ENCODE measurements at regions of chr5 and their contacts with region 1.

Region 1: DNA sequence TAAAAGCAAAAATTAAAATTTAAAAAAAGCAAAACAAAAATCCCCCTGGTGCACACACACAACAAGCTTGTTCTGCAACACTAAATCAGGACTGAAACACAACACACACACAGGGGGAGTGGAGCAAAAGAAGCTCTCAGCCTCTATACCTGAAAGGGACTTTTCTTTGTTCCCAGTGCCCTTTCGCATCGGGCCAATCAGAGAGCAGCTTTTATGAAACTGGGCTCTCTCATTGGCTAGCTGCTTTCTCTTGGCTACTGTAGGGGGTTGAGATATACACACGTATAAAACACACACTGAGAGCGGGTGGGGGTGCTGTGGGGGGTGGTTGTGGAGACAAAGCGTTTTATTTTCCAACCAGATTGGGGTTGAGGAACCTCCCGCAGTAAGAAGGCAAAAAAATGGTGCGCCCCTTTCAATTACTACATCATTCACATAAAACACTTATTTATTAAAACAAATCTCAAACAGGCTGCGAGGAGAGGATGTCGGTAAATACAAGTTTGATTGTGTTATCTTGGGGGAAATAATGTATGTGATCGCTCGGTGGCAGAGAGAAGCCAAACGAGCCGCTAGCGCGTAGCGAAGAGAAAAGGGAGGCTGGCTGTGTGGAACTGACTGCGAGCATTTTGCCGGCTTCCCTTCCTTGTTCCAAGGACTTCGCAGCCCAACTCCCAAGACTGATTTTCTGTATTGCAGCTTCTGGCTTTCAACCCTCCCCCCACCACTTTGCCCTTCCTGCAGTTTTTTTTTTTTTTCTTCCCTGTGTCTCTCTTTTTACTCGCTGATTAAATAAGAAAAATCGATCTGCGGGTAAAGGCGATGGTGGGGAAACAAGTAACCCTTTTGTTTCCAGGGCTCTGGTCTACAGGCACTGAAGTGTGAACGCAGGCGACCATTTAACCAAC is 2.5 kb upstream of the ZNF608 start:
- DNase-seq: peak; percentile 88
- H3K4me3 ChIP-seq: peak overlapping the region; percentile 64 to 70 (median 68)
- H3K27ac ChIP-seq: peak overlapping the region; percentile 92 to 93 (median 93)
- H3K4me1 ChIP-seq: peaks cover 0 to 23% (median 7%) of the 10 kb centered on the region in 4 donors
- H3K27me3 ChIP-seq: no peaks in the 10 kb centered on the region
- CTCF ChIP-seq: peak in 1 of 4 experiments; percentile 13
- EP300 ChIP-seq: no peak
- POLR2A ChIP-seq: peak; percentile 24 to 62

Region 2: DNA sequence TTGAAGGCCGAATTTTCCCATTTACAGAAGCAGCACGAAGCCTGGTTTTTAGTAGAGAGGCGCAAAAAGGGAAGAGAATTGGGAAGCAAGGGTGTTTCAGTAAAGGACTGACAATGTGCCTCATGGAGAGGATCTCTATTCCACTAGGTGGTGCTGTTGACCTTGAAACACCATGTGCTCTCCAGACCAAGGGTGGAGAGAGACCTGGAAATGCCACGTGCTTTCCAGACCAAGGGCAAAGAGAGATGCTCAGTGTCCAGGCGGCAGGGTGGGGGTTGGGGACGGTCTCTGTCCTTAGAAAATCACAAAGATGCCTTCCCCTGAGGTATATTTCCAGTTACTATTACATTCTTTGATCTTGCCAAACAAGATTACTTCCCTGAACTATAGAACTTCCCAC is 811.7 kb before region 1 on chr5:
- intact Hi-C with region 1: loop called (anchors 10 kb)
- DNase-seq: peak; percentile 62
- H3K4me3 ChIP-seq: no peak overlapping the region
- H3K27ac ChIP-seq: no peak overlapping the region
- H3K4me1 ChIP-seq: peaks cover 0 to 3% (median 0%) of the 10 kb centered on the region in 4 donors
- H3K27me3 ChIP-seq: no peaks in the 10 kb centered on the region
- CTCF ChIP-seq: peak in 3 of 4 experiments; percentile 60 to 73 (median 73)
- EP300 ChIP-seq: no peak
- POLR2A ChIP-seq: no peak

Region 3: DNA sequence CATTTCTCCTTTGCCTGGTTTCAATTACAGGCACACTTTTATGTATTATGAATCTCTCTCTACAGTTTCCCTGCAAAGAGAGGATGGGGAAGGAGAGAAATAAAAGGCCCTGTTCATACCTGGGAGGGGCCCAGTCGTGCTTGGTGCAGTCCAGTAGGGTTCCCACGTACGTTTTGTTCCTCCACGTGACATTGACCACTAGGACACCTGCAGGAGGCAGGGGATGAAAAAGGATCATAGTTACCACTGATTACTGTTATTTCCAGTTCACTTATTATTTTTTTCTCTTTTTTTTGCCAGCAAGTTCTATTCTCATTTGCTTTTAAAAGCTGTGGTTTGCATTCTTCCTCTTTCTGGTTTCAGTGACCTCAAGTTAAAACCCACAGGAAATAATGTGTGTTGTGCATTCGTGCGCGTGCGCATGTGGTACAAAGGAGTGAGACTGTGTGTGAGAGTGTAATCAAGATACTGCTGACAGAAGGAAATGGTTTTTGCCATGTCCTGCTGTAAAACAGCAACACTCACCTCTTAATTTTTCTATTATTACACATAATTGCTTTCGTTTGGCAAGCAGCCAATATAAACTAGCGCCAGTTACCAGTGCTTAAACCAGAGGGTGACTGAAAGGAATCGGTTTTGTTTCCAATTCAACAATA is 99.3 kb before region 1 on chr5:
- intact Hi-C with region 1: loop called (anchors 2 kb)
- DNase-seq: no peak
- H3K4me3 ChIP-seq: peak overlapping the region in 1 of 4 donors; percentile 9
- H3K27ac ChIP-seq: peak overlapping the region; percentile 83 to 93 (median 86)
- H3K4me1 ChIP-seq: peaks cover 0 to 60% (median 57%) of the 10 kb centered on the region in 4 donors
- H3K27me3 ChIP-seq: no peaks in the 10 kb centered on the region
- CTCF ChIP-seq: no peak
- EP300 ChIP-seq: no peak
- POLR2A ChIP-seq: no peak

Region 4: DNA sequence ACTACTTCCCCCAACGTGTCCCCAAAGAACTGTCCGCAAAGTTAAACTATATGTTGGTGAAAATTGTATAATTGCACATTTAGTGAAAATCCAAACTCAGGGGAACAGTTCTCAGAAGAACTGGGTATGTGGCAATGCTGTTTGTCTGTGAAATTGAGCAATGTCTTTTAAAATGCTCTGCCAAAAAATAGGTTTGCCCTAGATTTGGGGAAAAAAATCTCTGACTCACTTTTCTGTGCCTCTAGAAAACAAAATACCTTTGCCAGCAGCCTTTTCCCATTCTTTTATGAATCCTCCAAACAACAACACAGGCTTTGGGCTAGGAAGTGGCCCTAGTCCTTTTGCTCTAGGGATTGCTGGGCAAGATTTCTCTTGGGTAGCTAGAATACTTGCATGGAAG is 34.9 kb after region 1 on chr5:
- intact Hi-C with region 1: no loop called
- DNase-seq: no peak
- H3K4me3 ChIP-seq: no peak overlapping the region
- H3K27ac ChIP-seq: no peak overlapping the region
- H3K4me1 ChIP-seq: no peaks in the 10 kb centered on the region
- H3K27me3 ChIP-seq: no peaks in the 10 kb centered on the region
- CTCF ChIP-seq: no peak
- EP300 ChIP-seq: no peak
- POLR2A ChIP-seq: no peak

Region 5: DNA sequence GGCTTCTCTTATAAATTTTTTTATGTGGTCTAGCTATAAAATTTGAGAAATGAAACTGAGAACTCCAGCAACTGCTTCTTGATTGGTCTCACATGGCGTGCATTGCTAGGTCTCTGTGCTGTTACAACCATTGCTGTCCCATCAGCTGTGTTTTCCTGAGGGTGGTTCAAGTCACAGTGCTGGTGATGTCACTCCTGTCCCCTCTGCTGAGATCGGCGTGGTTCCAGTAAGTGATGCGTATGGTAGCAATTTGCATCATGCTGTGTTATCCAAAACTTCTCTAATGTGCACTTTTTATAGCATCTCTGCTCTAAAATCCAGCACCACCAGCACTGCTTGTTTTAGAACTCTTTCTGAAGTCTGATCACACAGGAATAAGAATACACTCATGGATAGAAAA is 110.1 kb after region 1 on chr5:
- intact Hi-C with region 1: no loop called
- DNase-seq: no peak
- H3K4me3 ChIP-seq: no peak overlapping the region
- H3K27ac ChIP-seq: no peak overlapping the region
- H3K4me1 ChIP-seq: no peaks in the 10 kb centered on the region
- H3K27me3 ChIP-seq: no peaks in the 10 kb centered on the region
- CTCF ChIP-seq: no peak
- EP300 ChIP-seq: no peak
- POLR2A ChIP-seq: no peak

Region 6: DNA sequence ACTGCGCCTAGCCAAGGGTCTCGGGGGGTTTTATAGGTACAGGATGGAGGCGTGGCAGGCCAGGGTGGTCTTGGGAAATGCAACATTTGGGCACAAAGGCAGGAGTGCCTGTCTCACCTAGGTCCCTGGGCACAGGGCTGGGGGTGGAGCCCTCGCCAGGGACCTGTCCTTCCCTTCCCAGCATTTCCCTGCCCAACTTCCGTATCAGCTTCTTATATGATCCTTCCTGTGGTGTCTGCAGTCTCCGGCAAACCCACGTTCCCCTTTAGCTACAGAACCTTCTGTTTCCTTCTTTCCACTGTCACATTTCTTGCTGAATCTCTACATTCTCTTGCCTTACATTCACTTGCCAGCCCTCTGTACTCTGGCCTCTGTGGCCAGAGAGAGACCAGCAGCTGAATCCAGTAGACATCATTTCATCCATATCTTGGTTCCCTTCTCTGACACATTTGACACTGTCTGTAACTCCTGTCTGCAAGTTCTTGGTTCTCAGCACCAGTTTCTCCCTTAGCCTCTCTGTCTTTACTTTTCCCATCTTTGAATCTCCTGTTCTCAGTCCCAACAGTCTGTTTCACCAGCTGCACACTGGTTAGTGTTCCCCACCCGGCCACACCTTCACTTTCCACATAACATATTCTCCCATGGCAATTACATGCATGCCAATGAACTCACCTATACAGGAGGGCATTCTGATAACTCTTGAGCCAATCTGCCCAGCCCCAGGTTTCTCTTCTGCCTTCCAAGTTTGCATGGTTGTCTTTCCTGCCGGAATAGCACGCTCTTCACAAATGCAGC is 132.2 kb after region 1 on chr5:
- intact Hi-C with region 1: no loop called
- DNase-seq: no peak
- H3K4me3 ChIP-seq: no peak overlapping the region
- H3K27ac ChIP-seq: no peak overlapping the region
- H3K4me1 ChIP-seq: no peaks in the 10 kb centered on the region
- H3K27me3 ChIP-seq: no peaks in the 10 kb centered on the region
- CTCF ChIP-seq: no peak
- EP300 ChIP-seq: no peak
- POLR2A ChIP-seq: no peak

Region 7: DNA sequence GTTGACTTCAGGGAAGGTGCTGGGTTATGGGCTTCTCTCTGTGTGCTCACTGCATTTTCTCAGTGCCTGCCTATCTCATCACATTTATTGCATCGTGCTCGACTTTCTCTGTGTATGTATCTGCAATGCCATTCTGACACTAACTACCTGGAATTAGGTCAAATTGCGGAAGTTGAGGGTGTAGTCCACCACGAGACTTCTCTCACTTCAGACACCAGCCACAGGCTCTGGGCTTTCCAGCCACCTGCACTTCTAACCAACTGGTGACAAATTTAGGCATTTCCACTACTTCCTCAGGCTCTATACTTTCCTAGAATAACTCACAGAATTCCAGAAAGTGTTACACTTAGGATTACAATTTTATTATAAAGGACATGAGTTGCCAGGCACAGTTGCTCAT is 186.1 kb after region 1 on chr5:
- intact Hi-C with region 1: loop called (anchors 10 kb)
- DNase-seq: no peak
- H3K4me3 ChIP-seq: no peak overlapping the region
- H3K27ac ChIP-seq: no peak overlapping the region
- H3K4me1 ChIP-seq: peaks cover 0 to 28% (median 16%) of the 10 kb centered on the region in 4 donors
- H3K27me3 ChIP-seq: no peaks in the 10 kb centered on the region
- CTCF ChIP-seq: no peak
- EP300 ChIP-seq: no peak
- POLR2A ChIP-seq: no peak

Region 8: GRCh38 chr5:125484742-125485641 is 736.1 kb after region 1 on chr5:
- intact Hi-C with region 1: loop called (anchors 2 kb)
- DNase-seq: peak; percentile 95
- H3K4me3 ChIP-seq: no peak overlapping the region
- H3K27ac ChIP-seq: peak overlapping the region; percentile 75 to 86 (median 84)
- H3K4me1 ChIP-seq: peaks cover 0 to 49% (median 28%) of the 10 kb centered on the region in 4 donors
- H3K27me3 ChIP-seq: no peaks in the 10 kb centered on the region
- CTCF ChIP-seq: no peak
- EP300 ChIP-seq: peak; percentile 67 to 96 (median 88)
- POLR2A ChIP-seq: no peak

Measured in sigmoid colon (tissue), 7 donors.